ENCODE measurements at regions of chr7 and their contacts with region 1.

Region 1: GRCh38 chr7:51141451-51142003 is 175.1 kb downstream of the COBL start:
- DNase-seq: peak in 1 of 2 experiments; percentile 17
- H3K4me3 ChIP-seq: no peak overlapping the region
- H3K27ac ChIP-seq: no peak overlapping the region
- H3K4me1 ChIP-seq: peaks cover 11% of the 10 kb centered on the region
- H3K27me3 ChIP-seq: no peaks in the 10 kb centered on the region
- CTCF ChIP-seq: peak; percentile 89

Region 2: DNA sequence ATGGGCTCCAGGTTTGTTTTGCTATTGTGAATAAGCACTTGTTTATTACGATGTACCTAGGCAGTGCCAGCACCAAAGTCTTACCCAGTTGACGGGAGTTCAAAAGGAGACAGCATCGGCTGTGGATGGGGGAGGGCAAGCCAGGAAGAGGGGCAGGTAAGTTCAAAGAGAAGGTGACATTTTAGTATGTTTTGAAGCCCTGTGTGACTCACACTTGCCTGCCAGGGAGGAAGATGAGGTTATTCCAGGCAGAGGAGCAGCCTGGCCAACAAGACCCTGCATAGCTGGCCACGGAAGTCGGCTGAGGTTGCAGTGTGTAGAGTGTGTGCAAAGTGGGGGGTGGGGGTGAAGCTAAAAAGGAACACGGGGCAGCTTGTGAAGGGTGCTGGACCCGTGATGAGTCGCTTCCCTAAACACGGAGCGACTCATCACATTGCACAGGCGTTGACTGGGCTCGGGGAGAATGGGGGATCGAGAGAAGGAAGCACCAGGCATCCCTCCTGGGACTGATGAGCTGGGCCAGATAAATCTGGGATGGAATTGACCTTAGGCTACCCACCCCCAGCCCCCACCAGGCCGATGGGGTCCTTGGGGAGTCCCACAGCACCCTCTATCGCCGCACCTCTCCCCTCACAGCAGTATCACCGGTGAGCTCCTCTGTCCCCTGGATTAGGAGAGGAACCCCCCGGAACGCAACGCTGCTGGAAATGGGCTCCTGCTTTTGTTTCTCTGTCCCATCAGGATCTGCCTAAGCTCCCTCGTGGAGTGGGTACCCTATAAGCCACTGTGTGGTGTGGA is 934.9 kb before region 1 on chr7:
- CTCF ChIA-PET with region 1: interaction called, 6 read pairs
- POLR2A ChIA-PET with region 1: no interaction called
- intact Hi-C with region 1: loop called (anchors 5 kb)
- DNase-seq: no peak
- H3K4me3 ChIP-seq: no peak overlapping the region
- H3K27ac ChIP-seq: no peak overlapping the region
- H3K4me1 ChIP-seq: no peaks in the 10 kb centered on the region
- H3K27me3 ChIP-seq: peaks cover 69% of the 10 kb centered on the region
- CTCF ChIP-seq: no peak

Region 3: DNA sequence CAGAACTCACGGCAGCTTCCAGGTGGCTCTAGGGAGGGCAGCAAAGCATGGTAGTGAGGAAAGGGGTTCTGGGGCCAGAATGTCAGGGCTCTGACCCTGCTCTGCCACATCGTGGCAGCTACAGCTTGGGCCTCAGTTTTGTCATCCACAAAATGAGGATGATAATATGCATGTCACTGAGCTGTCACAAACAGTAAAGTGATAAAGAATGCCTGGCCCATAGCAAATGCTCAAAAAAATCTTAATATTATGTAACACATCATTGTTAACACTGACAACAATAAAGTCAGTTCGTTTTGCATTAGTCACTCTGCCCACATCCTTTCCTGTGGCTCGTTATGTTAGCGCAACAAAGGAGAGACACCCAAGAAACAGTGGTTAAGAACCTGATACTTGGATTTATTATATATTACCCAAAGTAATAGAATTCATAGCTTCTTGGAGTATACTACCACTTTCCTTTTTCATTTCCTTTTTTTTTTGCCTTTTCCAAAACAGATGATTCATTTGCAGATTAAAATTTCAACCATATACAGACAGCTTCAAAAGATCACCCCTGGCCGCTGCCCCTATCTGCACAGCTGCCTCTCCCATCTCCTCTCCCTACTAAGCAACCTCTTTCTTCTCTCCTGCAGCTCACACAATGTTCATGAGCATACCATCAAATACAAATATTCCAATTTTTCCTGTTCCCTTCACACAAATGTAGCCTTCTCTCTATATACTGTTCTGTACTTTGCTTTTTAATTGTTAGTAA is 530.8 kb before region 1 on chr7:
- CTCF ChIA-PET with region 1: no interaction called
- POLR2A ChIA-PET with region 1: no interaction called
- intact Hi-C with region 1: loop called (anchors 5 kb)
- DNase-seq: peak; percentile 14 to 45
- H3K4me3 ChIP-seq: no peak overlapping the region
- H3K27ac ChIP-seq: no peak overlapping the region
- H3K4me1 ChIP-seq: peaks cover 6% of the 10 kb centered on the region
- H3K27me3 ChIP-seq: no peaks in the 10 kb centered on the region
- CTCF ChIP-seq: no peak

Region 4: GRCh38 chr7:50679218-50680007 is 462.1 kb before region 1 on chr7:
- CTCF ChIA-PET with region 1: no interaction called
- POLR2A ChIA-PET with region 1: no interaction called
- intact Hi-C with region 1: loop called (anchors 5 kb)
- DNase-seq: peak in 1 of 2 experiments; percentile 59
- H3K4me3 ChIP-seq: no peak overlapping the region
- H3K27ac ChIP-seq: no peak overlapping the region
- H3K4me1 ChIP-seq: peaks cover 10% of the 10 kb centered on the region
- H3K27me3 ChIP-seq: no peaks in the 10 kb centered on the region
- CTCF ChIP-seq: peak; percentile 74

Region 5: DNA sequence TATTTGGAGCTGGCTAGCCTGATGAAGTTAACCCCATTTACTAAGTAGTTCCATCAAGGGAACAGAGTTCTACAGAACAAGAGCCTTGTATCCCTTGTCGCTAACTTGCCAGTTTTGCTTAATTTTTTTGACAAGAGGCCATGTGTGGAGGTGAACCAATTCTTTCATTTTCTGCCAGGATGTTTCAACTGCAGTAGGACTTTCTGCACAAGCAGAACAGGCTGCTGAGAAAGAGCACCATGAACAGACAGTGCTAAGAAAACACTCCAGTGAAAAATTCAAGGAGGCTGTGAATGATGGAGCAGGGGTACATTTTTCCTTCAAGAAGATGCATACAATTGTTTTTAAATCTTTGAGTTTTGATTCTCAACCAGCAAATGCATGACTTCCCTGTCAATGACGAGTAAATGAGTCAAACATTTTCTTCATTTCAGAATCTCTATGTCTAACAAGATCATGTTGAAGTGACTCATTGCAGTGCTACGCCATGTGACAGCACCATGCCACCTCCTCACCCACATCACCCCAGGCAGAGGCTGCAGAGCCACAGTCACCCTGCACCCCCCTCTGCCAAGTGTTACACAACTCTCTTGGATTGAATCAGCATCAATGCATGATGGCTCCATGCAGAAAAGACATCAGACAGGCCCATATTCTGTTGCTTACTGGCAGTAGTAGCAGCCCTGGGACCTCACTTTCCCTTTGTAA is 18.1 kb before region 1 on chr7:
- CTCF ChIA-PET with region 1: interaction called, 12 read pairs
- POLR2A ChIA-PET with region 1: no interaction called
- intact Hi-C with region 1: no loop called
- DNase-seq: peak; percentile 90 to 99
- H3K4me3 ChIP-seq: no peak overlapping the region
- H3K27ac ChIP-seq: peak overlapping the region; percentile 50
- H3K4me1 ChIP-seq: peaks cover 19% of the 10 kb centered on the region
- H3K27me3 ChIP-seq: no peaks in the 10 kb centered on the region
- CTCF ChIP-seq: no peak

Region 6: DNA sequence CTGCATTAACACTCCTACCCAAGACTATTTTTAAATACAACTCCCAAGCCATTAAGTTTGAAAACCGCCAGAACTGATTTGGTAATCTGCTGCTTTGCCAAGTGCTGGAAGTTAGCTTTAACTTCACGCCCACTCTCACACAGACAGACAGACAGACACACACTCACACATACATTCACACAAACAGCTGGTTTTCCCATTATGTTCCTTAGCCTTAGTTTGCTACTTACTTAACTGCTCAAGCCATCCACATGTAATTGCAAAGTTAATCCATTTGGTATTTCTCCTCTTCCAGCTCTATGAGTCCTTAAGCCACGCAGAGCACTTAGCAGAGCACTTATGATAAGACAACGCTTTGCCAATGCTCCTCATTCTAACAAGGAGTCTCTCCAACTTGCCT is 166.7 kb after region 1 on chr7:
- CTCF ChIA-PET with region 1: no interaction called
- POLR2A ChIA-PET with region 1: no interaction called
- intact Hi-C with region 1: no loop called
- DNase-seq: no peak
- H3K4me3 ChIP-seq: no peak overlapping the region
- H3K27ac ChIP-seq: no peak overlapping the region
- H3K4me1 ChIP-seq: peaks cover 19% of the 10 kb centered on the region
- H3K27me3 ChIP-seq: no peaks in the 10 kb centered on the region
- CTCF ChIP-seq: no peak

Measured in PC-9 (cell line).